ENCODE measurements at regions of chr1 and their contacts with region 1.

Region 1: DNA sequence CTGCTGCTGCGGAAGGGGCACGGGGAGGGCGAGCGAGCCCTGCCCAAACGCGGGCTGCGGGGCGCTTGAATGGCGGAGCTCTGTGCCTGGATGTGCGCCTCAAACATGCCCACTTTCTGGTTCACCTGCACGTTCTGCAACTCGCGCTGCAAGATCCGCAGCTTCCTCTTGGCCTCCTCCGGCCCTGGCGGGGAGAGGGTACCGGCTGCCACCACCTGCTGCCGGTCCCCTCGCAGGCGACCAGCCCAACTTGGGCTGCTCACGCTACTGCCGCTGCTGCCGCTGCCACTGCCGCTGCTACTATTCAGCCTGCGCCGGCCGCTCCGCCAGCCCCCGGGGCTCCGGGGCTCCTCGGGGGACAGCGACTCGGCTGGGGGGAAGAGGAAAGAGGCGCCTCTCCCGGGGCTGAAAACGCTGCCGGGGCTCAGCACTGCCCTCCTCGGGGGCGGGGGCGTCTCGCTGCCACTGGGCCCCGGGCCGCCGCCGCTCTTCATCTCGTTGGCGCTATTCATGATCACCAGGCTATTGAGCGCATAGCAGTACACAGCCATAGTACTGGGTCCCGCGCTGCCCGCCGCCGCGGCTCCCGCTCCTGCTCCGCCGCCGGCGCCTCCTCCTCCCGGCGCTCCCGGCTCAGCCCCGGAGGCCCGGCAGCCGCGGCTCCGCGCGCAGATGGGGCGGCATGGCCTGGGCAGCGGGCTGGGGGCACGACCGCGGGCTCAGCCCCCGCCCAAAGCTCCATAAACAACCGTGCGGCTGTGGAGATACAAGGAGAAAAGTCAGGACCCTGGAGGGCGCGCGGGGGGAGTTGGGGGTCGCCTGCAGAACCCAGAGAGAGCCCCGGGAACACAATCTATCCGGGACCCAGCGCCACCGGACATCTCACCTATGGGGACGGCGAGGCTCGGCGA is 1.9 kb downstream of the ITPKB start:
- DNase-seq: peak; percentile 83
- H3K4me3 ChIP-seq: peak overlapping the region; percentile 83
- H3K27ac ChIP-seq: peak overlapping the region; percentile 83
- H3K4me1 ChIP-seq: peaks cover 75% of the 10 kb centered on the region
- CTCF ChIP-seq: peak; percentile 56

Region 2: GRCh38 chr1:226444901-226445300 is 292.3 kb before region 1 on chr1:
- CTCF ChIA-PET with region 1: no interaction called
- POLR2A ChIA-PET with region 1: no interaction called
- intact Hi-C with region 1: no loop called
- DNase-seq: peak; percentile 97
- H3K4me3 ChIP-seq: peak overlapping the region; percentile 42
- H3K27ac ChIP-seq: peak overlapping the region; percentile 93
- H3K4me1 ChIP-seq: peaks cover 58% of the 10 kb centered on the region
- CTCF ChIP-seq: peak; percentile 81

Region 3: DNA sequence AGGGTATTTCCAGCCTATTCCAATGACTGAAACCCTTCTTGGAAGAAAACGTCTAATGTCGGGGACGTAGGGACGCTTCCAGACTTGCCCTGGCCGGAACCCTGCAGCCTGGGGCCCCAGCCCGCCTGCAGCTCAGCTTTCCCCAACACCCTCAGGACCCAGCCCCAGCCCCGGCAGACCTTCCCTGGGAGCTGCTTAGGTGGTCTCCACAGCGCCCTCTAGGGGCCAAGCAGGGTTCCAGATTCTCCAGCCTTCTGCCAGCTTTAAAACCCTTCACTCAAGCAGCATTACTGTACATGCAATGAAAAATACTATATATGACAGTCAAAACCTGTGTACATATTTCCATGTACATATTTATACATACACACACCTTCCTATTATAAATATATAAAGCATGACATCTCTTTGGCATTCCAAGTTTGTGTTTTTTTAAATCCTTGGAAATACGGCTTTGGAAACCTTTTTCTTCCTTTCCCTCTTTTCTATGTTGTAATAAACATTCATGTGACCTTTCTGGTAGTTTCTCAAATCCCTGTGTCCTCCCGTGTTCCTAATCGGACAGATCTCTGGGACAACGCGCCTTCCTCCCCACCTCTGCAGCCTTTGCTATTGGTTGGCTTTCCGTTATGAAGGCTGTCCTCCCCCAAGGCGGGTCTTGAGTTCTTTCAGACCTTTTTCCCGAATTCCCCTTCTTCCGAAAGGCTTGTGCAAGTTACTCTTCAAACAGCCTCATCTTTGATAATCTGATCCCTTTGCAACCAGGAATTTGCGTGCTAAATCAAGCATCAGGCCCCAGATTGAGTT is 128.3 kb before region 1 on chr1:
- CTCF ChIA-PET with region 1: no interaction called
- POLR2A ChIA-PET with region 1: no interaction called
- intact Hi-C with region 1: no loop called
- DNase-seq: peak; percentile 80
- H3K4me3 ChIP-seq: no peak overlapping the region
- H3K27ac ChIP-seq: no peak overlapping the region
- H3K4me1 ChIP-seq: no peaks in the 10 kb centered on the region
- CTCF ChIP-seq: peak; percentile 97

Region 4: DNA sequence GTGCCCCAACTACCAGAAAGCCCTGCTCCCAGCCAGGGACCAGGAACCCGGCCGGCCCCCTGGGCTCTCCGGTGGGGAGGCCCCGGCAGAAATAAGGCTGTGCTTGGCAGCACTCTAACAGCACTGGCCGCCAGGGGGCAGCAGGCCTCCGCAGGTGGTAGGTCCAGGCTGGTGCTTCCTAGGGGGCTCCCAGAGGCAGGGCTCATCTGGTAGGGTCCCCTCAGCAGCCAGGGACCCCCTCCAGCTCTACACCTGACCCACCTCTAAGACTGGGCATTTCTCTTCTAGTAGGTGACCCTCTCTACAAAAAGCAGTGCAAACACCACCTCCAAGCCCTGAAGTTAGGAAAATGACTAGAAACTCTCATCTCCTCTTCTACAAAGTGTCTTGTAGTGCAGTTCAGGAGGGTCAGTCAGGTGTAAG is 103.0 kb before region 1 on chr1:
- CTCF ChIA-PET with region 1: no interaction called
- POLR2A ChIA-PET with region 1: no interaction called
- intact Hi-C with region 1: loop called (anchors 2 kb)
- DNase-seq: peak; percentile 81
- H3K4me3 ChIP-seq: no peak overlapping the region
- H3K27ac ChIP-seq: no peak overlapping the region
- H3K4me1 ChIP-seq: peaks cover 58% of the 10 kb centered on the region
- CTCF ChIP-seq: peak; percentile 98

Region 5: DNA sequence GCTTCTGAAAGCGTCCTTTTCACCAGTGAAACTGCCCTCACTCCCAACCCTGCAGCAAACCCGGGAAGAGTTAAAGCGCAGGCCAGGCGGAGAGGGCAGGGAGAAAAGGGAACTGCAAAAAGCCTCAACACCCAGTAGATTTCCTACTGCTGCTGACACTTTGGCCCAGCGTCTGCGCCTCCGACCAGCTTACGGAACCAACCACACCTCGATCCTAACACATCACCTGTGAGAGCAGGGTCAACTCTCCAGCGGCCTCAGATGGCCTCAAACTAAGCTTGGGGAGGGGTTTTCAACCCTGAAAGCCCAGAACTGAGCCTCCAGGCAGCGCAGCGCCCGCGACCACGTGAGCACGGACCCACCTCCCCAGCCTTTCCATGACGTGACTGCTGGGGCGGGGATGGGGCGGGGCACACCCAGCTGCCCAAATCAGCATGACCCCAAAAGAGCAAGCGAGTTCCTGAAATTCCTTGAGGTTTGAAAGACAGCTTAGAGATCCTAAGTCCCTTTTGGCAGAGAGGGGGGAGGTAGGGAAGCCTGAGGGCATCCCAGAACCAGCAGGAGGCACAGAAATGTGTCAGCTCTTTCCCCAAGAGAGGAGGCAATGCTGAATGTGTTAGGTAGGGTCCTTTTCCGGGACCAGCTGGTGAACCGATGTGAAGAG is 57.2 kb before region 1 on chr1:
- CTCF ChIA-PET with region 1: no interaction called
- POLR2A ChIA-PET with region 1: interaction called, 5 read pairs
- intact Hi-C with region 1: loop called (anchors 1 kb)
- DNase-seq: peak; percentile 84
- H3K4me3 ChIP-seq: peak overlapping the region; percentile 47
- H3K27ac ChIP-seq: peak overlapping the region; percentile 98
- H3K4me1 ChIP-seq: peaks cover 99% of the 10 kb centered on the region
- CTCF ChIP-seq: no peak

Region 6: GRCh38 chr1:226711976-226712741 is 25.0 kb before region 1 on chr1:
- CTCF ChIA-PET with region 1: interaction called, 3 read pairs
- POLR2A ChIA-PET with region 1: interaction called, 10 read pairs
- intact Hi-C with region 1: loop called (anchors 1 kb)
- DNase-seq: peak; percentile 86
- H3K4me3 ChIP-seq: peak overlapping the region; percentile 62
- H3K27ac ChIP-seq: peak overlapping the region; percentile 99
- H3K4me1 ChIP-seq: peaks cover 92% of the 10 kb centered on the region
- CTCF ChIP-seq: no peak

Region 7: DNA sequence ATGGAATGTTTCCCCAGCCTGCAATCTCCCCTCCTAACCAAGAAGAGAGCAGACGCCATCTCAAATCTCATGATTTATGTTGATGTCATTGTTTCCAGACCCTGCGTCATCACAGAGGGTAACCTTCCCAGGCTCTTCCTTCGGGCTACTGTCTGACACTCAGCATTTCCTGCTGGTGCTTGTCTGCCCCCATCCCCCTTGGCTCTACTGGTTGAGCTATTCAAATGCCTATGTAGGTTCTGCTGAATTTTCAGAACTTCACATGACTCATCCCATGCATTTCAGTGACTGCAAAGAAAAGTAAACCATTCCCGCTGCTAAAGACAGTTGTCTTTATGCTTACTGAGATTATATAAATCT is 26.7 kb after region 1 on chr1:
- CTCF ChIA-PET with region 1: interaction called, 3 read pairs
- POLR2A ChIA-PET with region 1: interaction called, 23 read pairs
- intact Hi-C with region 1: loop called (anchors 1 kb)
- DNase-seq: peak; percentile 57
- H3K4me3 ChIP-seq: peak overlapping the region; percentile 50
- H3K27ac ChIP-seq: peak overlapping the region; percentile 98
- H3K4me1 ChIP-seq: peaks cover 55% of the 10 kb centered on the region
- CTCF ChIP-seq: no peak

Region 8: GRCh38 chr1:226940029-226940805 is 203.1 kb after region 1 on chr1 and contains the start of gene COQ8A:
- CTCF ChIA-PET with region 1: no interaction called
- POLR2A ChIA-PET with region 1: no interaction called
- intact Hi-C with region 1: loop called (anchors 10 kb)
- DNase-seq: peak; percentile 99
- H3K4me3 ChIP-seq: peak within 1 kb of the TSS; percentile 83
- H3K27ac ChIP-seq: peak within 1 kb of the TSS; percentile 91
- H3K4me1 ChIP-seq: peaks cover 26% of the 10 kb centered on the region
- CTCF ChIP-seq: no peak
- total RNA-seq, gene COQ8A: 14.2 and 19.4 TPM in 2 replicates